ENCODE measurements at regions of chrX and their contacts with region 1.

Region 1: DNA sequence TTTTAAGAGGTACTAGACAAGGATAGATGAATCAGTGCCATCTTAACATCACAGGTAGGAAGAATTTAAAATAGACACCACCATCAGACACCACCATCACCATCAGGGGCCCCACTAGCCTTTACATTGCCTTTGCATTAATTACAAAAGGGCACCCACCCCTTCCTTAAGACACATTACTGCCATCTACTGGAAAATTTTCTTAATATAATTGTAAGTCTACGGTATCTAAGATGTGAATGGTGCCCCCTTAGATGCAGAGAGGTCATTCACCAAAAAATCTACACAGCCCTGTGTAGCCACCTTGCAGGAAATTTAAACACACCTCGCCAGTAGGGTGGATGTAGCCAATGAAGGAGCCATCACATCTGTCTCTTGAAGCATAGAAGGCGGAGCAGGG is 184.1 kb downstream of the MID1IP1 start:
- DNase-seq: no peak
- H3K4me3 ChIP-seq: no peak overlapping the region
- H3K27ac ChIP-seq: no peak overlapping the region
- H3K4me1 ChIP-seq: no peaks in the 10 kb centered on the region
- H3K27me3 ChIP-seq: no peaks in the 10 kb centered on the region
- CTCF ChIP-seq: peak in 1 of 2 donors; percentile 34

Region 2: DNA sequence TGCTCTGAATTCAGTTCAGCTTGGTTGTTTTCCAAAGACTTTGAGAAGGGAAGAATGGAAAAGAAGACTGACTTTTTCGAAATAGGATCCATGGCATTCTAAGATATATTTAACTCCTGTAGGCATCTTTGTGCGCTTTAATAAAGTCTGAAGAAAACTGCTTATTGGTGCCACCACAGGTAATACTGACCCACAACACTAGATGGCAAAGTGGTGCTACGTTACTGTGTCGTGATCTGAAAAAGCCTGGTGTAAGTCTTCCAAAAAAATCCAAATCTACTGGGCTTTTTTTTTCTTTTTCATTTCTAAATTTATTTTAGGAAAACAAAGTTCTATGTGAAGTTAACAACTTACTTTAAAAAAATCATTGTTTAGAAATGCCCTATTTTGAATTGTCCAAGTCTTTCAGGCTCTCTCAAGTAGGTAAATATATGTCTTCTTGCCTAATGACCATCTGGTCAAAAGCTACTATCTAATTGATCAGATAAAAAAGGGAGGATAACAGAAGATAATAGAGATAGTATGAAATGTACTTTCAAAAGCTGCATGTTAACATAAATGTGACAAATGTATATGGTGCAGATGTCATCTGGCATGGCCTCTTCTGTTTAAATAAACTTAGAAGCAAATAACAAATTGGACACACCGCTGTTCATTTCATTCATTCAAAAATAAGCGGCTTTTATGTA is 231.1 kb before region 1 on chrX:
- CTCF ChIA-PET with region 1: no interaction called
- dilution Hi-C with region 1: no loop called
- in situ Hi-C with region 1: loop called in 1 of 2 experiments (anchors 25 kb)
- intact Hi-C with region 1: loop called (anchors 1 kb)
- DNase-seq: peak; percentile 35
- H3K4me3 ChIP-seq: no peak overlapping the region
- H3K27ac ChIP-seq: no peak overlapping the region
- H3K4me1 ChIP-seq: no peaks in the 10 kb centered on the region
- H3K27me3 ChIP-seq: peaks cover 2% of the 10 kb centered on the region
- CTCF ChIP-seq: peak; percentile 59 to 74

Region 3: GRCh38 chrX:38774249-38774648 is 211.1 kb before region 1 on chrX:
- CTCF ChIA-PET with region 1: no interaction called
- dilution Hi-C with region 1: no loop called
- in situ Hi-C with region 1: loop called (anchors 10 to 25 kb)
- intact Hi-C with region 1: no loop called
- DNase-seq: no peak
- H3K4me3 ChIP-seq: no peak overlapping the region
- H3K27ac ChIP-seq: no peak overlapping the region
- H3K4me1 ChIP-seq: no peaks in the 10 kb centered on the region
- H3K27me3 ChIP-seq: peaks cover 5% of the 10 kb centered on the region
- CTCF ChIP-seq: no peak

Region 4: GRCh38 chrX:39149761-39150160 is 164.4 kb after region 1 on chrX:
- CTCF ChIA-PET with region 1: no interaction called
- dilution Hi-C with region 1: no loop called
- in situ Hi-C with region 1: no loop called
- intact Hi-C with region 1: loop called (anchors 2 kb)
- DNase-seq: peak; percentile 12
- H3K4me3 ChIP-seq: no peak overlapping the region
- H3K27ac ChIP-seq: no peak overlapping the region
- H3K4me1 ChIP-seq: no peaks in the 10 kb centered on the region
- H3K27me3 ChIP-seq: no peaks in the 10 kb centered on the region
- CTCF ChIP-seq: peak; percentile 63 to 85